ENCODE measurements at regions of chr7 and their contacts with region 1.

Region 1: GRCh38 chr7:41977151-41977651 is 259.8 kb downstream of the GLI3 start:
- DNase-seq: peak; percentile 73
- H3K4me3 ChIP-seq: no peak overlapping the region
- H3K27ac ChIP-seq: no peak overlapping the region
- H3K4me1 ChIP-seq: peaks cover 52% of the 10 kb centered on the region
- H3K27me3 ChIP-seq: no peaks in the 10 kb centered on the region
- CTCF ChIP-seq: peak; percentile 80

Region 2: GRCh38 chr7:40815512-40815911 is 1161.7 kb before region 1 on chr7:
- CTCF ChIA-PET with region 1: no interaction called
- POLR2A ChIA-PET with region 1: no interaction called
- intact Hi-C with region 1: no loop called
- DNase-seq: no peak
- H3K4me3 ChIP-seq: no peak overlapping the region
- H3K27ac ChIP-seq: no peak overlapping the region
- H3K4me1 ChIP-seq: no peaks in the 10 kb centered on the region
- H3K27me3 ChIP-seq: no peaks in the 10 kb centered on the region
- CTCF ChIP-seq: no peak

Region 3: GRCh38 chr7:41847151-41847550 is 130.1 kb before region 1 on chr7:
- CTCF ChIA-PET with region 1: no interaction called
- POLR2A ChIA-PET with region 1: no interaction called
- intact Hi-C with region 1: no loop called
- DNase-seq: no peak
- H3K4me3 ChIP-seq: no peak overlapping the region
- H3K27ac ChIP-seq: no peak overlapping the region
- H3K4me1 ChIP-seq: no peaks in the 10 kb centered on the region
- H3K27me3 ChIP-seq: no peaks in the 10 kb centered on the region
- CTCF ChIP-seq: no peak

Region 4: GRCh38 chr7:42574685-42575084 is 597.5 kb after region 1 on chr7:
- CTCF ChIA-PET with region 1: interaction called, 7 read pairs
- POLR2A ChIA-PET with region 1: no interaction called
- intact Hi-C with region 1: loop called (anchors 2 kb)
- DNase-seq: peak; percentile 25
- H3K4me3 ChIP-seq: no peak overlapping the region
- H3K27ac ChIP-seq: no peak overlapping the region
- H3K4me1 ChIP-seq: peaks cover 8% of the 10 kb centered on the region
- H3K27me3 ChIP-seq: no peaks in the 10 kb centered on the region
- CTCF ChIP-seq: peak; percentile 59

Region 5: GRCh38 chr7:42831718-42832431 is 854.7 kb after region 1 on chr7:
- CTCF ChIA-PET with region 1: no interaction called
- POLR2A ChIA-PET with region 1: no interaction called
- intact Hi-C with region 1: loop called (anchors 5 kb)
- DNase-seq: peak; percentile 60
- H3K4me3 ChIP-seq: no peak overlapping the region
- H3K27ac ChIP-seq: no peak overlapping the region
- H3K4me1 ChIP-seq: no peaks in the 10 kb centered on the region
- H3K27me3 ChIP-seq: no peaks in the 10 kb centered on the region
- CTCF ChIP-seq: peak; percentile 73